Calu3 (cell line): ENCODE measurements at regions of chr14 and their contacts with region 1.

Region 1: GRCh38 chr14:22163051-22163450 is 426.0 kb downstream of the DAD1 start:
- DNase-seq: no peak
- H3K4me3 Mint-ChIP-seq: no peak overlapping the region
- H3K27ac Mint-ChIP-seq: no peak overlapping the region
- H3K4me1 Mint-ChIP-seq: peaks cover 23% of the 10 kb centered on the region
- H3K27me3 Mint-ChIP-seq: no peaks in the 10 kb centered on the region
- CTCF ChIP-seq: no peak

Region 2: GRCh38 chr14:22122227-22122818 is 40.7 kb before region 1 on chr14:
- CTCF ChIA-PET with region 1: interaction called, 10 read pairs
- intact Hi-C with region 1: no loop called
- DNase-seq: peak; percentile 27
- H3K4me3 Mint-ChIP-seq: no peak overlapping the region
- H3K27ac Mint-ChIP-seq: no peak overlapping the region
- H3K4me1 Mint-ChIP-seq: peaks cover 9% of the 10 kb centered on the region
- H3K27me3 Mint-ChIP-seq: peaks cover 50% of the 10 kb centered on the region
- CTCF ChIP-seq: no peak

Region 3: GRCh38 chr14:22143363-22143762 is 19.7 kb before region 1 on chr14:
- CTCF ChIA-PET with region 1: no interaction called
- intact Hi-C with region 1: no loop called
- DNase-seq: no peak
- H3K4me3 Mint-ChIP-seq: no peak overlapping the region
- H3K27ac Mint-ChIP-seq: no peak overlapping the region
- H3K4me1 Mint-ChIP-seq: no peaks in the 10 kb centered on the region
- H3K27me3 Mint-ChIP-seq: peaks cover 65% of the 10 kb centered on the region
- CTCF ChIP-seq: no peak

Region 4: DNA sequence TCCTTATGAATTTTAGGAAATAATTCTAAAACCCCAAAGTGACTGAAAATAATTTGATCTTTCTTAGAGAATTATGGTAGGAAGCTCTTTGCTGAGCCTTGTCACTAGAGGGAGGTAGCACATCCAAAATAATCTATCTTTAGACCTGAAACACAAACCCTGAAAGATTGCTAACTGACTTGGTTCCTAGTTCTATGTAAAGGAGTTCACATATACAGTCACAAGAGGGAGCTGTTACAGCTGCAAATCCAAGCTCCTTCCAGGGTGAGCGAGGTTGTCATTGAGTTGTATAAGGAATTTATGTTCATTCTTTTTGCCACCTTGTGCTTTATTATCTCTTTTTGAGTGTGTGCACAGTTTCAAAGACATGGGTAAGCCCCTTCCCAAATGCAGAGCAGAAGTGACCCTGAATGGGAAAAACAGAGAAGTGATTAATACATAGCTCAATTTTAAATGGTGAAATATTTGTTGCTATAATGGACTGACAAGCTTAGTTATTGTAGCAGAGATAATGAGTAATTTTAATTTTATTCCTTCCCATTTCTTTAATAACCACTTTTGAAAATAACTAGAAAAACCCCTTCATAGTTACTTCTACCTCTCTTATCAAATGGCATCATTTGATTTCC is 38.0 kb after region 1 on chr14:
- CTCF ChIA-PET with region 1: interaction called, 37 read pairs
- intact Hi-C with region 1: loop called (anchors 2 kb)
- DNase-seq: peak; percentile 19
- H3K4me3 Mint-ChIP-seq: no peak overlapping the region
- H3K27ac Mint-ChIP-seq: no peak overlapping the region
- H3K4me1 Mint-ChIP-seq: no peaks in the 10 kb centered on the region
- H3K27me3 Mint-ChIP-seq: no peaks in the 10 kb centered on the region
- CTCF ChIP-seq: peak; percentile 46

Region 5: DNA sequence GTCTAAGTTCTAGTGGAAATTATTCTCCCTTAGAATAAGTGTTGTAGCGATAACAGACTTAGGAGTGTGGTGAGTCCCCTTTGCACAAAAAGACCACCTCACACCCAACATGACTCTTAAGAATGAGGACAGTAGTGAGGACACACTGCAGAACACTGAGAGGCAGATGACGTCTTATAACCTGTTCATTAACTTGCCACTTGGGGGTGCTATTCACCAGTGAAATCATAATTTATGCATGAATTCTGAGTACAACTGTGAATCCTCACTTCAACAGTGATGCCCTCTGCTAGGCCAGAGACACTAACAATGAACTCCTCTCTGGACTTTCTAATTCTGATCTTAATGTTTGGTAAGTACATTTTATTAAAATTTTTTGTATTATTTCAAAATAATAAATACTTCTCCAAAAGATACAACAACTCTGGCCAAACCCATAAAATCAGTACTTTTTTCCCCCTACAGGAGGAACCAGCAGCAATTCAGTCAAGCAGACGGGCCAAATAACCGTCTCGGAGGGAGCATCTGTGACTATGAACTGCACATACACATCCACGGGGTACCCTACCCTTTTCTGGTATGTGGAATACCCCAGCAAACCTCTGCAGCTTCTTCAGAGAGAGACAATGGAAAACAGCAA is 151.2 kb after region 1 on chr14:
- CTCF ChIA-PET with region 1: interaction called, 9 read pairs
- intact Hi-C with region 1: loop called (anchors 5 kb)
- DNase-seq: peak; percentile 57
- H3K4me3 Mint-ChIP-seq: no peak overlapping the region
- H3K27ac Mint-ChIP-seq: no peak overlapping the region
- H3K4me1 Mint-ChIP-seq: no peaks in the 10 kb centered on the region
- H3K27me3 Mint-ChIP-seq: no peaks in the 10 kb centered on the region
- CTCF ChIP-seq: peak; percentile 41

Region 6: GRCh38 chr14:22375321-22375930 is 212.4 kb after region 1 on chr14:
- CTCF ChIA-PET with region 1: interaction called, 10 read pairs
- intact Hi-C with region 1: no loop called
- DNase-seq: peak; percentile 50
- H3K4me3 Mint-ChIP-seq: no peak overlapping the region
- H3K27ac Mint-ChIP-seq: no peak overlapping the region
- H3K4me1 Mint-ChIP-seq: no peaks in the 10 kb centered on the region
- H3K27me3 Mint-ChIP-seq: no peaks in the 10 kb centered on the region
- CTCF ChIP-seq: no peak